Lower leg skin (tissue), 4 donors: ENCODE measurements at regions of chr7 and their contacts with region 1.

Region 1: DNA sequence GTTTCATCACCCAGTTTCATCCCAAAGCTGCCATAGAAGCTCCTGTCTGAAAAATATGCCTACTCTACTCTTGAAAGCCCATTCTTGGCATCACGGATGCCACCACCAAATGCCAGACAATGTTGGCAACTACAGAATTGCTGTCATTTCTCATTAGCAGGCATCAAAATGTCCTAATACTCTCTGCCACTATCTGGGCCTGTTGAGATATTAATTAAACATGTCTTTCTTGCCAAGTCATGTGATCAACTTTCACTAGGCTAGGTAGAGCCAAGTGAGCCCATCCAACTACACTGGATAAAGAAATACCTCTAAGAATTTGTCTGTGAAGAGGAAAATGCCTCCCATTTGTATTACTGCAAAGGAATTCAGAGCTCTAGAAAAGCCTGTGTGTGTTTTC is 1093.3 kb upstream of the C7orf33 start:
- DNase-seq: no peak
- H3K4me3 ChIP-seq: no peak overlapping the region
- CTCF ChIP-seq: no peak
- POLR2A ChIP-seq: no peak

Region 2: DNA sequence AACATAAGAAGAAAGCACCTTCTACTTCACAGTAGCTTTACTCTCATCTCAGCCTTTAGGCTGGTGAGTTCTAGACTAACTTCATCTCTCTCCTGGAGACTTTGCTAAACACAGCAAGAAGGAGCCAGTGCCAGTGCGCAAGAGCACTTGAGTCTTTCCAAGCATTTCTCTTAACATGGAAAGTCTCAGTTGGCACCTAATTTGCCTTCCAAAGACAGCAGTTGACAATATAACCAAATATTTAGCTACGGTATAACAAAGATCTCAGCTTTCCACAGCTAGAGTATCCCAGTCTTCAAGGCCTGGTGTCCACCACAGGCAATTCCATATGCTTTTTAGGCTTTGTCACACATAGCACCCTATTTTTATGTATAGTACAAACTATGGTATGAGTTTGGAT is 175.7 kb before region 1 on chr7:
- intact Hi-C with region 1: no loop called
- DNase-seq: no peak
- H3K4me3 ChIP-seq: no peak overlapping the region
- CTCF ChIP-seq: no peak
- POLR2A ChIP-seq: no peak

Region 3: DNA sequence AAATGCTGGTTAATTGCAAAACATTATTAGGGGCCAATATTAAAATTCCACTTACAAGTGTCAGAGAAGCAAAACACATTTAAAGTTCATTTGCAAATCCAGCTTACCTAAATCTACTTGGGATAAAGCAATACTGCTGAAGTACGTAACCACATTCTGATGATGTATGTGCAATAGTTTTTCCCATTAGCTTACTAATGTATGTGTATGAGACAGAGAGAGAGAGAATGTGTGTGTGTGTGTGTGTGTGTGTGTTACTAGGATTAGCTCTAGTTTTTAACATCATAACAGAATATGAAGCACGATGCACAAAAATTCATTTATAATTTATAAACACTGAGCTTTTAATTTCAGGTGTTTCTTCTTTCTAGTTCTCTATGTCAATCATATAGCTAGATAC is 19.1 kb after region 1 on chr7:
- intact Hi-C with region 1: loop called (anchors 2 kb)
- DNase-seq: no peak
- H3K4me3 ChIP-seq: no peak overlapping the region
- CTCF ChIP-seq: no peak
- POLR2A ChIP-seq: no peak

Region 4: GRCh38 chr7:148255333-148255732 is 758.1 kb after region 1 on chr7:
- intact Hi-C with region 1: no loop called
- DNase-seq: no peak
- H3K4me3 ChIP-seq: no peak overlapping the region
- CTCF ChIP-seq: no peak
- POLR2A ChIP-seq: no peak